Left ventricle myocardium superior (tissue), 1 donor: ENCODE measurements at regions of chr4 and their contacts with region 1.

Region 1: DNA sequence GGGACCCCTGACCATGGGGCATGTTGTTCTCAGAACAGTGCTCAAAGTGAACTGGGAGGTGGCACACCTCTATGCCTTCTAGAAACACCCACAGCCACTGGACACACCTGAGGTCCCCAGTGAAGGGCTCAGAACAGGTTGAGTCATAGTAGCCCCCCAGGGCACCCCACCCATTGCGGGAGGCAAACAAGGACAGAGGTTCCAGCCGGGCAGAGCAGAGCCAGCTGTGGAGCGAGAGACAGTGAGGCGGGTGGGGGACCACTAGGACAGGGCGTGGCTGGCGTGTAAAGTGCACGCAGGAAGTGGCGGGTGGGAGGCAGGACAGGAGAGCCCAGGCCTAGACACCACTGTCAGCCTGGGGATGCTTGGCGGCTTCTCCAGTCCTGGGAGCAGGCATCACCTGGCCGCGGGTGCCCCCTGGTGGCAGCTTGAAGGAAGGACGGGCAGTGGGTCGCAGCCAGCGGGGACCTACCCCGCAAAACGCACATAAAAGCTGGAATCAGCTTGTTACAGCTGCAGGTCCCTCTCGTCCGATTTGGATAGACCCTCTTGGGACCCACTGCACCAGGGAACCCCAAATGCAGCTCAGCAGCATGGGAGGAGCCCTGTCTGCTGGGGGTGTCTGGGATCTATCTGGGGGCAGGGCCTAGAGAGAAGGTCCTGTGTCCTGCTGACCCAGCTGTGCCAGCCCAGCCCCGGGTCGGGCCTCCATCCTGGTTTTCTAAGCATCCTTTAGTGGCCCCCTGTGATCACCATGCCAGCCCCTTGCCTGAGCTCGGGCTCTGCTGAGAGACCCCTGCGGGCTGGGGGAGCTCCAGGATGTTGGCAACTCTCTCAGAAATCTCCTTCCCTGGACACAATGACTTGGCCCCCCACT is 57.6 kb downstream of the WFS1 start:
- DNase-seq: peak; percentile 89
- ATAC-seq: peak; percentile 78

Region 2: DNA sequence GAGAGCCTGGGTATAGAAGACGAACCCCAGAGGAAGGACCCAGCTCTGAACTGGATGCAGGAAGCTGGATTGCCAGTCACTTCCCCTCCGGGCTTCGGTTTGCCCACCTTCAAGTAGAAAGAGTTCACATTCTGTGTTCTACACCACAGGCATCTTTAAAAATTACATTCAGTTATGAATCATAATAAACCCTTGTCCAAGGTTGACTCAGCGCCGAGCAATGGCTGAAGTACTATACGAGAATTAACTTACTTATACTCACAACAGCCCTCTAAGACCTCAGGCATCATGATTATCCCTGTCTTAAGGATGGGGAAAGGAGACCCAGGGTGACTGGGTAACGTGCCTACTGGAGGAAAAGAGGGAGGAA is 691.5 kb before region 1 on chr4:
- intact Hi-C with region 1: no loop called
- DNase-seq: no peak
- ATAC-seq: no peak

Region 3: GRCh38 chr4:6250235-6250983 is 76.9 kb before region 1 on chr4:
- intact Hi-C with region 1: loop called (anchors 1 kb)
- DNase-seq: no peak
- ATAC-seq: peak; percentile 51